PC-3 (cell line): ENCODE measurements at regions of chr12 and their contacts with region 1.

Region 1: DNA sequence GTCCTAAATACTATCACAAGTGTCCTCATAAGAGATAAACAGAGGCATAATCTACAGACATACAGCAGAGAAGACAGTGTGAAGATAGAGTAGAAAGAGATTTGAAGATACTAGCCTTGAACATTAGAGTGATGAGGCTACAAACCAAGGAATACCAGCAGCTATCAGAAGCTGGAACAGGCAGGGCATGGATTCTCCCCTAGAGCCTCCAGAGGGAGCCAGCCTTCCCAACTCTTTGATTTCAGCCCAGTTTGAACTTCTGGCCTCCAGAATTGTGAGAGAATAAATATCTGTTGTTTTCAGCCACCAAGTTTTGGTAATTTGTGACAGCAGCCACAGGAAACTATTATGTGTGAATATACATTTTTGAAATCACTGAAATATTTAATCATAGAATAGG is 47.2 kb downstream of the CCDC91 start:
- DNase-seq: peak; percentile 40
- ATAC-seq: peak; percentile 66; the same call in 1 of the 2 replicates
- H3K4me3 ChIP-seq: no peak overlapping the region
- H3K27ac ChIP-seq: no peak overlapping the region
- H3K4me1 ChIP-seq: no peaks in the 10 kb centered on the region
- H3K27me3 ChIP-seq: no peaks in the 10 kb centered on the region
- CTCF ChIP-seq: peak; percentile 75

Region 2: DNA sequence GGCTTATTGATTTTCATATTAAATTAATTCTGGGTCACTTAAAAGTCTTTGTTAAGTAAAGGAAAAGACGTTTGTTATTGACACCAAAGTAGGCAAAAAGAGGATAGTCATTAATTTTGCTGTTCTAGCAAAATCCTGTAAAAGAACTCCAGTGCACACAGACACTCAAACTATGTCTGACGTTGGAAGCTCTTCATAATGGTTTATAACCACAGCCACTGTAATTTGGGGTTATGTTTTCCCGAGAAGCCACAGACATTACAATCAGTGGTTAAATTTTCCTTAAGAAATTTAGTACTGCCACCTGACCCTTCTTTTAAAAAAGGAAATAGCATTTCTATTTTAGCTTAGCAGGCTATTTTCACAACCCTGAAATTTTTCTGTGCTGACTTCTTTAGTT is 220.4 kb after region 1 on chr12:
- CTCF ChIA-PET with region 1: no interaction called
- POLR2A ChIA-PET with region 1: no interaction called
- intact Hi-C with region 1: loop called (anchors 10 kb)
- DNase-seq: no peak
- ATAC-seq: no peak
- H3K4me3 ChIP-seq: no peak overlapping the region
- H3K27ac ChIP-seq: no peak overlapping the region
- H3K4me1 ChIP-seq: no peaks in the 10 kb centered on the region
- H3K27me3 ChIP-seq: no peaks in the 10 kb centered on the region
- CTCF ChIP-seq: no peak